ENCODE measurements at regions of chr22 and their contacts with region 1.

Region 1: GRCh38 chr22:24005201-24005600 is at the start of gene GSTT4:
- DNase-seq: no peak
- H3K4me3 ChIP-seq: no peak within 1 kb of the TSS
- H3K27ac ChIP-seq: no peak within 1 kb of the TSS
- H3K27me3 ChIP-seq: no peaks in the 10 kb centered on the region
- CTCF ChIP-seq: no peak

Region 2: DNA sequence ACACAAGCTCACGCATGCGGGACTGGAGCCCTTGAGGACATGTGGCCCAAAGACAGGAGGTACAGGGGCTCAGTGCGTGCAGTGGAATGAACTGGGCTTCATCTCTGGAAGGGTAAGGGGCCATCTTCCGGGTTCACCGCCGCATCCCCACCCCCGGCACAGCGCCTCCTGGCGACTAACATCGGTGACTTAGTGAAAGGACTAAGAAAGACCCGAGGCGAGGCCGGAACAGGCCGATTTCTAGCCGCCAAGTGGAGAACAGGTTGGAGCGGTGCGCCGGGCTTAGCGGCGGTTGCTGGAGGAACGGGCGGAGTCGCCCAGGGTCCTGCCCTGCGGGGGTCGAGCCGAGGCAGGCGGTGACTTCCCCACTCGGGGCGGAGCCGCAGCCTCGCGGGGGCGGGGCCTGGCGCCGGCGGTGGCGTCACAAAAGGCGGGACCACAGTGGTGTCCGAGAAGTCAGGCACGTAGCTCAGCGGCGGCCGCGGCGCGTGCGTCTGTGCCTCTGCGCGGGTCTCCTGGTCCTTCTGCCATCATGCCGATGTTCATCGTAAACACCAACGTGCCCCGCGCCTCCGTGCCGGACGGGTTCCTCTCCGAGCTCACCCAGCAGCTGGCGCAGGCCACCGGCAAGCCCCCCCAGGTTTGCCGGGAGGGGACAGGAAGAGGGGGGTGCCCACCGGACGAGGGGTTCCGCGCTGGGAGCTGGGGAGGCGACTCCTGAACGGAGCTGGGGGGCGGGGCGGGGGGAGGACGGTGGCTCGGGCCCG is 111.1 kb before region 1 on chr22 and contains the start of gene MIF:
- in situ Hi-C with region 1: no loop called
- DNase-seq: peak; percentile 92
- H3K4me3 ChIP-seq: peak within 1 kb of the TSS; percentile 82
- H3K27ac ChIP-seq: peak within 1 kb of the TSS; percentile 88
- H3K27me3 ChIP-seq: no peaks in the 10 kb centered on the region
- CTCF ChIP-seq: peak; percentile 91

Region 3: GRCh38 chr22:24059121-24059520 is 53.9 kb after region 1 on chr22:
- in situ Hi-C with region 1: loop called (anchors 5 kb)
- DNase-seq: peak; percentile 87
- H3K4me3 ChIP-seq: no peak overlapping the region
- H3K27ac ChIP-seq: peak overlapping the region; percentile 73
- H3K27me3 ChIP-seq: no peaks in the 10 kb centered on the region
- CTCF ChIP-seq: no peak

Region 4: GRCh38 chr22:24550028-24550901 is 545.1 kb after region 1 on chr22:
- in situ Hi-C with region 1: no loop called
- DNase-seq: no peak
- H3K4me3 ChIP-seq: no peak overlapping the region
- H3K27ac ChIP-seq: no peak overlapping the region
- H3K27me3 ChIP-seq: no peaks in the 10 kb centered on the region
- CTCF ChIP-seq: no peak

Measured in brain microvascular endothelial cell (primary cell).